PC-9 (cell line): ENCODE measurements at regions of chr9 and their contacts with region 1.

Region 1: DNA sequence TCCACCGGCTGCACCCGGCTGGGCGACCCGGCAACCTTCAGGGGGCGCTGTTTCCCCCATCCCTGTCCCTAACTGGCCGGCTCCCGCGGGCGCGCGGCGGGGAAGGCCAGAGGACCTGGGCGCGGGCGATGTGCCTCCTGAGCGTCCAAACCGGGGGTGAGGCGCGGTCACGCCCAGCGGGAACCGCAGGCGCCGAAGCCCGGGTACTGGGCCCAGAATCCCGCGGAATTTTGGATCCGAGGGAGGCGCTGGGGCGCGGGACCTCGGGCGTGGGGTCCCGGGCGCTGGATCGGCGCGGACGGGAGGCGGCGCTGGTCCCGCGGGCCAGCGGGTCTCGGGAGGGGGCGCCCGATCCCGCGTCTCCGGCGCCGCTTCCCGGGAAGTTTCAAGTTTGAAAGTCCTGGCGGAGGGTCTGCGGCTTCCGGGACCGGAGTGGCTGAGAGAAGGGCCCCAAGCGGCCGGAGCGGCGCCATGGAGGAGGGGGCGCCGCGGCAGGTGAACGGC is at the start of gene PKN3:
- DNase-seq: peak; percentile 31 to 93
- H3K4me3 ChIP-seq: peak within 1 kb of the TSS; percentile 61
- H3K27ac ChIP-seq: no peak within 1 kb of the TSS
- H3K4me1 ChIP-seq: no peaks in the 10 kb centered on the region
- H3K27me3 ChIP-seq: no peaks in the 10 kb centered on the region
- CTCF ChIP-seq: peak; percentile 81
- total RNA-seq, gene PKN3: 5.5 and 9.1 TPM in 2 replicates

Region 2: GRCh38 chr9:128714586-128715435 is 12.3 kb after region 1 on chr9:
- CTCF ChIA-PET with region 1: no interaction called
- POLR2A ChIA-PET with region 1: interaction called, 39 read pairs
- intact Hi-C with region 1: no loop called
- DNase-seq: no peak
- H3K4me3 ChIP-seq: no peak overlapping the region
- H3K27ac ChIP-seq: no peak overlapping the region
- H3K4me1 ChIP-seq: peaks cover 4% of the 10 kb centered on the region; the same call in 1 of the 2 replicates
- H3K27me3 ChIP-seq: no peaks in the 10 kb centered on the region
- CTCF ChIP-seq: no peak